Activated CD8-positive, alpha-beta memory T cell treated with anti-CD3 and anti-CD28 coated beads, Interleukin-2, amount 10 ng/mL, durations not matched to agents 7 days and 5 days (primary cell): ENCODE measurements at regions of chr14 and their contacts with region 1.

Region 1: GRCh38 chr14:59438195-59438647 is 27.0 kb downstream of the GPR135 start:
- DNase-seq: no peak
- ATAC-seq: no peak
- H3K4me3 Mint-ChIP-seq: no peak overlapping the region
- H3K27ac Mint-ChIP-seq: no peak overlapping the region
- H3K4me1 Mint-ChIP-seq: peaks cover 5% of the 10 kb centered on the region
- H3K27me3 Mint-ChIP-seq: peaks cover 3% of the 10 kb centered on the region

Region 2: DNA sequence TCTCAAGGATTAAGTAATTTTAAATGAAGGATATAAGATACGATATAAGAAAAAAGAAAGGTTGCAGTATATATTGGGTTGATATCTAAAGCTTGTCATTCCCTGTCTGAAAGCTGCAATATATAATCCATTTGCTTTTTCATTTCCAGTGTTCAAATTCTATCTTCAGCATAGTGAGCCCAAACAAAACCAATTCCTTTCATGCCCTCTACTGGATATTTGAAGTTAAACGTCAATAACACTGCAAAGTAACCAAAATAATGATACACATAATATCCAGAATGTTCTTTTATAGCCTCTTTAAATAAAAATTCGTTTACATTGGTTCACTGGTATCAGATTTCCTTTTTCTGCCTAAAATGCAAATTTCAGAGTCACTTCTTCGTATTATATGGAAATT is 314.2 kb before region 1 on chr14:
- CTCF ChIA-PET with region 1: interaction called, 12 read pairs
- DNase-seq: no peak
- ATAC-seq: no peak
- H3K4me3 Mint-ChIP-seq: no peak overlapping the region
- H3K27ac Mint-ChIP-seq: no peak overlapping the region
- H3K4me1 Mint-ChIP-seq: no peaks in the 10 kb centered on the region
- H3K27me3 Mint-ChIP-seq: peaks cover 44% of the 10 kb centered on the region

Region 3: GRCh38 chr14:59130462-59130861 is 307.8 kb before region 1 on chr14:
- CTCF ChIA-PET with region 1: interaction called, 12 read pairs
- DNase-seq: no peak
- ATAC-seq: no peak
- H3K4me3 Mint-ChIP-seq: no peak overlapping the region
- H3K27ac Mint-ChIP-seq: no peak overlapping the region
- H3K4me1 Mint-ChIP-seq: no peaks in the 10 kb centered on the region
- H3K27me3 Mint-ChIP-seq: peaks cover 38% of the 10 kb centered on the region